Keratinocyte (primary cell): ENCODE measurements at regions of chr15 and their contacts with region 1.

Region 1: DNA sequence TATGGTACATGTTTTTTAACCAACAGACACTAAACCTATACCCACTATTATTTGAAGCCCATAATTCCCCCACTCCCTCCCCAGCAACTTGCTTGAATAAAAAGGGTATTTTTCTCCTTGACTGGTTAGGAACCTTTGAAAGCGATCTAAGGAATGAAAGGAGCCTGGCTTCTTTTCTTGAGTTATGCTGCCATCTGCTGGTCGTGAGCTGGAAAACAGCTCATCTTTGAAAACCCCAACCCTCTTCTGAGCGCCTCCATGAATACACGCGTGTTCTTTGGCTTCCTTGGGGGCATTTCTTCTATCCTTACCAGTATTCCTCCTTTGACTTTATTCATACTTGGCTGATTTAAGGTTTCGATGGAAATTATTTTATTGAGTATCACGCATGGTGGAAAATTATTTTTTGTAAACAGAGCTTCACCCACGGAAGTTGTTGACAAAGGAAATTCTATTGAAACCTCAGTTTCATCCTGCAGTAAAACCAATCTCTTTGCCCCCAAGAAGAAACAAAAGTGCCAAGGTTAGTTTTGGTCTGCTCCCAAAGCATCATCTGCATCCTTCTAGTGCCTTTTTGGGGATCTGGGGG is 171.6 kb downstream of the SV2B start:
- DNase-seq: peak; percentile 17
- H3K4me3 ChIP-seq: no peak overlapping the region
- H3K27ac ChIP-seq: no peak overlapping the region
- H3K4me1 ChIP-seq: no peaks in the 10 kb centered on the region
- H3K27me3 ChIP-seq: peaks cover 5% of the 10 kb centered on the region
- CTCF ChIP-seq: peak; percentile 59 to 72 (median 68)

Region 2: GRCh38 chr15:91049378-91050127 is 222.1 kb before region 1 on chr15:
- dilution Hi-C with region 1: loop called (anchors 25 kb)
- DNase-seq: no peak
- H3K4me3 ChIP-seq: no peak overlapping the region
- H3K27ac ChIP-seq: no peak overlapping the region
- H3K4me1 ChIP-seq: no peaks in the 10 kb centered on the region
- H3K27me3 ChIP-seq: no peaks in the 10 kb centered on the region
- CTCF ChIP-seq: peak; percentile 53 to 81 (median 54)

Region 3: DNA sequence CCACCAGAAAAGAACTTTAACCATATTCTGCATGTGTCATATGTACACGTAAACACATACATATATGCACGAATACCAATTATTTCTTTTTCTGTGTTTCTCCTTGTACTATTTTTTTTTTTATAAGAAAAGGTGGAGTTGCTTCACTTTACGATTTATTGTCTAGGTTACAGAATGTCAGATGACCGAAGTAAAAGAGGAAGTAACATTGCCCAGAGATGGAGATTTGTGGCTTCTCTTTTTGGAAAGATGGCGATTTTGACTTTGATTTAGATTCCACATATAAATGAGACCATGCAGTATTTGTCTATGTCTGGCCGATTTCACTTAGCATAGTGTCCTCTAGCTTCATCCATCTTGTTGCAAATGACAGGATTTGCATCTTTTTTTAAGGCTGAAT is 121.5 kb after region 1 on chr15:
- dilution Hi-C with region 1: no loop called
- DNase-seq: no peak
- H3K4me3 ChIP-seq: no peak overlapping the region
- H3K27ac ChIP-seq: no peak overlapping the region
- H3K4me1 ChIP-seq: no peaks in the 10 kb centered on the region
- H3K27me3 ChIP-seq: no peaks in the 10 kb centered on the region
- CTCF ChIP-seq: no peak